CD4-positive, alpha-beta memory T cell (primary cell): ENCODE measurements at regions of chr3 and their contacts with region 1.

Region 1: GRCh38 chr3:113745273-113746068 is 578 bp downstream of the NAA50 start:
- DNase-seq: peak; percentile 82 to 92 (median 84)
- H3K4me3 ChIP-seq: peak overlapping the region; percentile 87 to 96
- H3K4me3 Mint-ChIP-seq: peak overlapping the region; percentile 92 to 100 (median 98)
- H3K27ac ChIP-seq: peak overlapping the region; percentile 99
- H3K27ac Mint-ChIP-seq: peak overlapping the region; percentile 100
- H3K4me1 ChIP-seq: peaks cover 73% of the 10 kb centered on the region
- H3K4me1 Mint-ChIP-seq: peaks cover 49 to 90% (median 62%) of the 10 kb centered on the region in 4 donors
- H3K27me3 ChIP-seq: no peaks in the 10 kb centered on the region
- H3K27me3 Mint-ChIP-seq: no peaks in the 10 kb centered on the region

Region 2: GRCh38 chr3:113019182-113020137 is 726.0 kb before region 1 on chr3:
- CTCF ChIA-PET with region 1: no interaction called
- POLR2A ChIA-PET with region 1: interaction called, 4 read pairs
- intact Hi-C with region 1: loop called (anchors 5 kb)
- DNase-seq: peak; percentile 76 to 89 (median 81)
- H3K4me3 ChIP-seq: peak overlapping the region; percentile 59 to 89
- H3K4me3 Mint-ChIP-seq: peak overlapping the region; percentile 92 to 97 (median 96)
- H3K27ac ChIP-seq: peak overlapping the region; percentile 89
- H3K27ac Mint-ChIP-seq: peak overlapping the region; percentile 91 to 98 (median 95)
- H3K4me1 ChIP-seq: peaks cover 45% of the 10 kb centered on the region
- H3K4me1 Mint-ChIP-seq: peaks cover 42 to 76% (median 61%) of the 10 kb centered on the region in 4 donors
- H3K27me3 ChIP-seq: no peaks in the 10 kb centered on the region
- H3K27me3 Mint-ChIP-seq: no peaks in the 10 kb centered on the region

Region 3: GRCh38 chr3:113514265-113514769 is 231.2 kb before region 1 on chr3:
- CTCF ChIA-PET with region 1: interaction called, 9 read pairs
- POLR2A ChIA-PET with region 1: interaction called, 29 read pairs
- intact Hi-C with region 1: loop called (anchors 1 kb)
- DNase-seq: no peak
- H3K4me3 ChIP-seq: peak overlapping the region; percentile 61 to 93
- H3K4me3 Mint-ChIP-seq: no peak overlapping the region
- H3K27ac ChIP-seq: peak overlapping the region; percentile 74
- H3K27ac Mint-ChIP-seq: no peak overlapping the region
- H3K4me1 ChIP-seq: peaks cover 19% of the 10 kb centered on the region
- H3K4me1 Mint-ChIP-seq: peaks cover 6 to 24% (median 9%) of the 10 kb centered on the region in 4 donors
- H3K27me3 ChIP-seq: peaks cover 4% of the 10 kb centered on the region
- H3K27me3 Mint-ChIP-seq: peaks cover 3 to 8% of the 10 kb centered on the region in 2 donors

Region 4: GRCh38 chr3:113696658-113697499 is 48.6 kb before region 1 on chr3:
- CTCF ChIA-PET with region 1: interaction called, 20 read pairs
- POLR2A ChIA-PET with region 1: interaction called, 87 read pairs
- intact Hi-C with region 1: loop called (anchors 1 kb)
- DNase-seq: peak; percentile 99 to 100 (median 100)
- H3K4me3 ChIP-seq: peak overlapping the region; percentile 74 to 90
- H3K4me3 Mint-ChIP-seq: no peak overlapping the region
- H3K27ac ChIP-seq: peak overlapping the region; percentile 86
- H3K27ac Mint-ChIP-seq: no peak overlapping the region
- H3K4me1 ChIP-seq: peaks cover 46% of the 10 kb centered on the region
- H3K4me1 Mint-ChIP-seq: peaks cover 20 to 33% (median 25%) of the 10 kb centered on the region in 4 donors
- H3K27me3 ChIP-seq: no peaks in the 10 kb centered on the region
- H3K27me3 Mint-ChIP-seq: no peaks in the 10 kb centered on the region

Region 5: DNA sequence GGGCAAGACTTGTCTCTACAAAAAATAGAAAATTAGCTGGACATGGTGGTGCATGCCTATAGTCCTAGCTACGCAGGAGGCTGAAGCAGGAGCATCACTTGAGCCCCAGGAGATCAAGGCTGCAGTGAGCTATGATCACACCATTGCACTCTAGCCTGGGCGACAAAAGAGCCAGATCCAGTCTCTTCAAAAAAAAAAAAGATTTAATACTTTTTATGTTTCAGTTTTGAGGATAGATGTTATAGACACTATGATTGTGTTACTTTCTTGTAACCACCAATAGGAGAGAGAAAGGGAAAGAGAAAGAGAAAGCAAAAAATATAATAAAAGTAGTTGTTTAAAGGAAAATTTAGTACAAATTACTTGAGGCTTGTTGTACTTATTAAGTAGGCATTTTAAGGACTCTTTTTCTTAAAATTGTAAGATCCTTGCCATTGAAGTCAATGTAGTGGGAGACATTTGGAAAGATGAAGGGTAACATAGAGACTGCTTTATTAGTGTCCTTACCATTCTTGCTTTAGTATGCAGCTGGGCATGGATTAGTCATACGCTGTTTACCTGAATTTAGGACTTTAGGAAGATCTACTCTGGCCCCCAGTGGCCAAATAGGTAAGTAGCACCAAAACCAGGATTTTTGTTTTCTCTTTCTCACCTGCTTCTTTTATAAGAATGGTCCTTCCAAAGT is 167.2 kb after region 1 on chr3:
- CTCF ChIA-PET with region 1: interaction called, 11 read pairs
- POLR2A ChIA-PET with region 1: no interaction called
- intact Hi-C with region 1: loop called (anchors 2 kb)
- DNase-seq: peak; percentile 44 to 61 (median 51)
- H3K4me3 ChIP-seq: no peak overlapping the region
- H3K4me3 Mint-ChIP-seq: peak overlapping the region; percentile 50 to 82 (median 64)
- H3K27ac ChIP-seq: no peak overlapping the region
- H3K27ac Mint-ChIP-seq: peak overlapping the region in 5 of 7 donors; percentile 10 to 81 (median 56)
- H3K4me1 ChIP-seq: no peaks in the 10 kb centered on the region
- H3K4me1 Mint-ChIP-seq: peaks cover 0 to 5% (median 4%) of the 10 kb centered on the region in 4 donors
- H3K27me3 ChIP-seq: no peaks in the 10 kb centered on the region
- H3K27me3 Mint-ChIP-seq: no peaks in the 10 kb centered on the region

Region 6: GRCh38 chr3:114104414-114104813 is 358.9 kb after region 1 on chr3:
- CTCF ChIA-PET with region 1: no interaction called
- POLR2A ChIA-PET with region 1: no interaction called
- intact Hi-C with region 1: no loop called
- DNase-seq: no peak
- H3K4me3 ChIP-seq: no peak overlapping the region
- H3K4me3 Mint-ChIP-seq: no peak overlapping the region
- H3K27ac ChIP-seq: no peak overlapping the region
- H3K27ac Mint-ChIP-seq: no peak overlapping the region
- H3K4me1 ChIP-seq: no peaks in the 10 kb centered on the region
- H3K4me1 Mint-ChIP-seq: no peaks in the 10 kb centered on the region
- H3K27me3 ChIP-seq: no peaks in the 10 kb centered on the region
- H3K27me3 Mint-ChIP-seq: peaks cover 0 to 7% of the 10 kb centered on the region in 2 donors

Region 7: GRCh38 chr3:114290911-114291901 is 545.7 kb after region 1 on chr3:
- CTCF ChIA-PET with region 1: no interaction called
- POLR2A ChIA-PET with region 1: no interaction called
- intact Hi-C with region 1: loop called (anchors 10 kb)
- DNase-seq: peak; percentile 85 to 93 (median 87)
- H3K4me3 ChIP-seq: peak overlapping the region; percentile 38 to 42
- H3K4me3 Mint-ChIP-seq: peak overlapping the region; percentile 79 to 91 (median 86)
- H3K27ac ChIP-seq: peak overlapping the region; percentile 76
- H3K27ac Mint-ChIP-seq: peak overlapping the region; percentile 90 to 97 (median 95)
- H3K4me1 ChIP-seq: peaks cover 49% of the 10 kb centered on the region
- H3K4me1 Mint-ChIP-seq: peaks cover 27 to 56% (median 43%) of the 10 kb centered on the region in 4 donors
- H3K27me3 ChIP-seq: no peaks in the 10 kb centered on the region
- H3K27me3 Mint-ChIP-seq: no peaks in the 10 kb centered on the region